ENCODE measurements at regions of chr11 and their contacts with region 1.

Region 1: DNA sequence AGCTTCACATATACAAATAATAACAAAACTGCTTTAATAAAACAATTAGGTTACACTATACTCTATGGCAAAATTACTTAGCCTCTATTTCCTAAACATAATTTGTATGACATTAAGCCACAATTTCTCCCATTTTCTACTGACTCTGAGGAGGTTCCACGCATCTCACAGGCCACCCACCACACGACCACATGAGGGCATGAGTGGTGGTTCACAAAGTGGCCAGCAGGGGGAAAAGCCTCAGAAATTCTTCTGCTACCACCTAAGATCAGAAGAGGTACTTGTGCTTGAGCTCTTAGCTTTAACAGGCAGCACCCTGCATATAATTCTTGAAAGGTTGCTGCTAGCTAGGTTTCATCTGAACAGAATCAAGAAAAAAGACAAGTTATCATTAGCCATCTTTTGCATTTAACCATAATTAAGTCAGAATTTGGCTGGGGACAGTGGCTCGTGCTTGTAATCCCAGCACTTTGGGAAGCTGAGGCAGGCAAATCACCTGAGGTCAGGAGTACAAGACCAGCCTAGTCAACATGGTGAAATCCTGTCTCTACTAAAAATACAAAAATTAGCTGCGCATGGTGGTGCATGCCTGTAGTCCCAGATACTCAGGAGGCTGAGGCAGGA is 7.7 kb downstream of the LPXN start:
- DNase-seq: peak; percentile 79 to 91 (median 87)
- H3K4me3 ChIP-seq: no peak overlapping the region
- H3K27ac ChIP-seq: no peak overlapping the region
- H3K4me1 ChIP-seq: peaks cover 8 to 46% (median 28%) of the 10 kb centered on the region in 4 experiments
- H3K27me3 ChIP-seq: no peaks in the 10 kb centered on the region

Region 2: DNA sequence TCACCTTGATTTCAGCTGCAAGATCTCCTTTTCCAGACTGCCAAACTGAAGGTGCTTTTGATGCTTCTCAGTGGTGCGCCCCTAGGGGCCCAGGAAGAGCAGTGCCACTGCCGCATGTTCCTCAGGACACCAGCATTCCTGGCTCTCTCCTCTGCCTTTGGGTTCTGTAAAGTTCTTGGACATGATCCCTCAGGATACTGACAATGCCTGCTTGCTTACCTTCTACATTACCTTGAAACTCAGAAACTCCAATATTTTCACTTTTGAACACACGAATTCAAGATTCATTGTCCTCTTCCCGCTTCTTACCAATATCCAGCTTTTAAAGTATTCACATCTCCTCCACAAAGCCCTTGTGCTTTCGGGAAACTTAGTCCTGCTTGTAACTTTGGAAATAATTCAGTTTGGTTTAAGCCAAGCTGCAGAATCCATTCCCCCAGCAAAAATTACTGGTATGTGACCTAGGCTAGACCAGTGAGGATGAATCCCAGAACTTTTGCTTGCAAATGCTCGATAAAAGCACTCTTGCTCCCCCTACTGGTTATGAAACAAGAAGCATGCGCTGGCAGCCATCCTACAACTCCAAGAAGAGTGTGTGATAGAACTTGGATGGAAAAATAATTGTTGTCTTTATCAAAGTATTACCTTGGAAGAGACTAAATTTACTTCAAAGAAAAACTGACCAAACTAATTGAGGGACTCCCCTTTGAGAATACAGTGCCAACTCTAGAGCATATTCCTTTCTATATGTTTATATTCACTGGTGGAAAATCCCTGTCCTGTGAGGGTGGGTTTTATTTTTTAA is 43.6 kb before region 1 on chr11:
- CTCF ChIA-PET with region 1: interaction called, 47 read pairs
- POLR2A ChIA-PET with region 1: interaction called, 3 read pairs
- DNase-seq: peak; percentile 85 to 86 (median 85)
- H3K4me3 ChIP-seq: peak overlapping the region in 6 of 7 experiments; percentile 27 to 68 (median 48)
- H3K27ac ChIP-seq: peak overlapping the region; percentile 74 to 85
- H3K4me1 ChIP-seq: peaks cover 12 to 40% (median 29%) of the 10 kb centered on the region in 4 experiments
- H3K27me3 ChIP-seq: no peaks in the 10 kb centered on the region

Region 3: DNA sequence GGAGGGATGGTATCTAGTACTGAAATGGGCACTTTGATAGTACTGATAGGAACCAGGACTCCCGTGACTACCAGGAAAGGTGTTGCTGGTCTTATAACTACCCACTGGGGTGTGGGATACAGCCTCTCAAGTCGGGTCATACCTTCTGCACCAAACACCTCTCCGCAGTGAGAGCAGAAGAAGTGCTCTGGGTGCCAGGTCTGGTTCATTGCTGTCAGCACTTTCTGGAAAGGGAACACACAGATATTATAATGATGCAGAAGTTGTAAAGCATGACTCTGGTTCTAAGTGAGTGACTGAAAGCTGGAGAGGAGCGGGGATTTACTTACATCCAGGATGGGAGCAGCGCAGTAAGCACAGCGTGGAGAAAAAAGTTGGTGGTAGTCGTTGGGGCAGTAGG is 18.4 kb before region 1 on chr11:
- CTCF ChIA-PET with region 1: interaction called, 17 read pairs
- POLR2A ChIA-PET with region 1: interaction called, 3 read pairs
- DNase-seq: no peak
- H3K4me3 ChIP-seq: no peak overlapping the region
- H3K27ac ChIP-seq: no peak overlapping the region
- H3K4me1 ChIP-seq: no peaks in the 10 kb centered on the region
- H3K27me3 ChIP-seq: no peaks in the 10 kb centered on the region

Region 4: DNA sequence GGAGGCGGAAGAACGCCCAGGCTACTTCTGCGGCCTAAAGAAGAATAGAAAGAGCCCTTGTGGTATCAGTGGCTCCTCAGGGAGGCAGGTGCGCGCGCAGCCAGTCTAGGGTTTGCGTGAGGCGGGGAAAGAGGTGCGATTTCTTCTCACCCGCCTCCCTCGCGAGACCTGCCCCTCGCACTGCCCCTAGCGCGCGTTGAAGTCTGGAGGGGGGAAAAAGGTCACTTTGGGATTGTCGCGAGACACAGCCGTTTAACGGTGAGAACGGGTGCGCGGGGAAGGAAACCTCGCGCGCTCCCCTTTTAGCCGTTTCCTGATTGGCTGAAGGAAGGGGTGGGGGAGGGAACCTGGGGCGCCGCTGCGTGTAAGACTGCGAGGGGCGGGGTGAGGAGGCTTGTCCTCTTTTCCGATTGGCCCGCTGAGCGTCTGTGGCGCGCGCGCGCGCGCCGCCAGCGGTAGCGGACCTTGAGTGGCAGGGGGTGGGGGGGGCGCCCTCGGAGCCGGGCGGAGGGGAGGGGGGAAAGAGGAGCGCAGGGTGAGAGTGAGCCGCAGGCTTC is 10.7 kb after region 1 on chr11 and contains the start of gene ZFP91:
- CTCF ChIA-PET with region 1: interaction called, 32 read pairs
- POLR2A ChIA-PET with region 1: interaction called, 13 read pairs
- DNase-seq: peak; percentile 99 to 100 (median 99)
- H3K4me3 ChIP-seq: peak within 1 kb of the TSS; percentile 87 to 96 (median 92)
- H3K27ac ChIP-seq: peak within 1 kb of the TSS; percentile 100
- H3K4me1 ChIP-seq: peaks cover 46 to 67% (median 58%) of the 10 kb centered on the region in 4 experiments
- H3K27me3 ChIP-seq: no peaks in the 10 kb centered on the region

Region 5: GRCh38 chr11:58609723-58610122 is 41.7 kb after region 1 on chr11:
- CTCF ChIA-PET with region 1: interaction called, 19 read pairs
- POLR2A ChIA-PET with region 1: interaction called, 4 read pairs
- DNase-seq: peak in 1 of 3 donors; percentile 18
- H3K4me3 ChIP-seq: no peak overlapping the region
- H3K27ac ChIP-seq: peak overlapping the region in 1 of 2 experiments; percentile 12
- H3K4me1 ChIP-seq: peaks cover 0 to 5% (median 0%) of the 10 kb centered on the region in 4 experiments
- H3K27me3 ChIP-seq: no peaks in the 10 kb centered on the region

Region 6: GRCh38 chr11:58788355-58789023 is 220.5 kb after region 1 on chr11:
- CTCF ChIA-PET with region 1: interaction called, 11 read pairs
- POLR2A ChIA-PET with region 1: no interaction called
- DNase-seq: peak; percentile 60 to 79 (median 78)
- H3K4me3 ChIP-seq: no peak overlapping the region
- H3K27ac ChIP-seq: no peak overlapping the region
- H3K4me1 ChIP-seq: peaks cover 0 to 6% (median 0%) of the 10 kb centered on the region in 4 experiments
- H3K27me3 ChIP-seq: no peaks in the 10 kb centered on the region

Measured in common myeloid progenitor, CD34-positive (primary cell).